ENCODE measurements at regions of chr1 and their contacts with region 1.

Region 1: GRCh38 chr1:116737020-116737854 is 17.0 kb upstream of the CD2 start:
- DNase-seq: peak; percentile 66
- ATAC-seq: peak; percentile 62
- H3K4me3 ChIP-seq: no peak overlapping the region
- H3K27ac ChIP-seq: peak overlapping the region; percentile 97
- H3K4me1 ChIP-seq: peaks cover 39% of the 10 kb centered on the region
- H3K27me3 ChIP-seq: no peaks in the 10 kb centered on the region
- CTCF ChIP-seq: peak; percentile 88 to 95 (median 93); a peak in 5 of 6 replicates
- EP300 ChIP-seq: no peak
- POLR2A ChIP-seq: peak; percentile 51; the same call in 1 of the 2 replicates
- RAD21 ChIP-seq: peak; percentile 95

Region 2: DNA sequence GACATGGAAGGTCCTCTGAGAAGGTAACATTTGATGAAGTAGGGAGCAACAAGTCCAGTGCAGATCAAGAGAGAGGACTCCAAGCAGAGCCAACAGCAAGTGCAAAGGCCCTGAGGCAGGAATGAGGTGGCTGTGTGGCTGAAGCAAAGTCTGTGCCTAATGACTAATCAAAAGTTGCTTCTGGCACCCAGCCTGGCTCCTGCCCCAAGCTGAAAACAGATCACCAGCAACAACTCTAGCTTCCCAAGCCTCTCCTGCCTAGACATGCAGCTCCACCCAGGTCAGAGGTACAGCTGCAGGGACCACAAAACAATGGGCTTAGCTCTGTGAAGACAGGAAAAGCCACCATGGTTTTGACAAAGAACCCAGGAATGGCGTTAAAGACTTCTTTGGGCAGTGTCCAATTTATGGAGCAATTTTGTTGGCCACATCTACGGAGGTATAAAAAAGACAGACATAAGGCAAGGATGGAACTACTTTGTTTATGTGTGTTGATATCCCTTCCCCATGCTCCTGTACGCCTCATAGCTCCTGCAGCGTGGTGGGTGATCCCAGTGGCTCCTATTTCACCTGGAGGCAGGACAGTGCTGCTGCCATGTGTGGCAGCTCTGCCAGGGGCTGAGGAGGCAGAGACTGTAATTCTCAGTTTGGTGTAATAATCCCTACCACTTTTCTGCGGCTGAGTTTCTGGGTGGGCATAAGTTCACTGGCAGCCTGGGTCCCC is 43.3 kb before region 1 on chr1:
- CTCF ChIA-PET with region 1: no interaction called
- POLR2A ChIA-PET with region 1: no interaction called
- RAD21 ChIA-PET with region 1: no interaction called
- SMC1A ChIA-PET with region 1: no interaction called
- in situ Hi-C with region 1: no loop called
- intact Hi-C with region 1: no loop called
- DNase-seq: no peak
- ATAC-seq: no peak
- H3K4me3 ChIP-seq: no peak overlapping the region
- H3K27ac ChIP-seq: no peak overlapping the region
- H3K4me1 ChIP-seq: no peaks in the 10 kb centered on the region
- H3K27me3 ChIP-seq: no peaks in the 10 kb centered on the region; a peak in 1 of 4 replicates
- CTCF ChIP-seq: no peak
- EP300 ChIP-seq: no peak
- POLR2A ChIP-seq: no peak
- RAD21 ChIP-seq: no peak

Region 3: GRCh38 chr1:116724765-116725375 is 12.4 kb before region 1 on chr1:
- CTCF ChIA-PET with region 1: interaction called, 72 read pairs
- POLR2A ChIA-PET with region 1: no interaction called
- RAD21 ChIA-PET with region 1: interaction called, 40 read pairs
- SMC1A ChIA-PET with region 1: interaction called, 64 read pairs
- in situ Hi-C with region 1: no loop called
- intact Hi-C with region 1: no loop called
- DNase-seq: no peak
- ATAC-seq: peak; percentile 88
- H3K4me3 ChIP-seq: no peak overlapping the region
- H3K27ac ChIP-seq: no peak overlapping the region
- H3K4me1 ChIP-seq: no peaks in the 10 kb centered on the region
- H3K27me3 ChIP-seq: no peaks in the 10 kb centered on the region
- CTCF ChIP-seq: peak; percentile 70 to 78 (median 72)
- EP300 ChIP-seq: no peak
- POLR2A ChIP-seq: no peak
- RAD21 ChIP-seq: peak; percentile 80

Region 4: DNA sequence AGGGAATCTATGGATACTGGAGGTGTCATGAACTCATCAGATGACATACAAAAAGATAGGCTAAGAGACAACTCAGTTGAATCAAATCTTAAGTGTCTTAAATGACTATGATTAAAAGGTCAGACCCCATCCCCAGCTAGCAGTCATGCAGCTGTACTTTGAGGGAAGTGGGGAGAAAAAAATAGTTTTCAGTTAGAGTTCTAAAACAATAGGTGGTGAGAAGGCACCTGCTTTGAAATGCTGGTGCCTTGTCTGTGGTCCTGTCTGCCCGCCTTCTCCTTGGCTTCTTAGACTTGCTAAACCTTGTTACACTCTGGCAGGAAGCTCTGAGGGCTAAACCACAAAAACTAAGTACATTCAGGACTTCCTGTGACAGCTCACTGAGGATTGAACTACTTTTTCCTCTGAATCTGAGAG is 32.3 kb after region 1 on chr1:
- CTCF ChIA-PET with region 1: interaction called, 120 read pairs
- POLR2A ChIA-PET with region 1: interaction called, 45 read pairs
- RAD21 ChIA-PET with region 1: interaction called, 176 read pairs
- SMC1A ChIA-PET with region 1: interaction called, 224 read pairs
- in situ Hi-C with region 1: no loop called
- intact Hi-C with region 1: loop called (anchors 1 kb)
- DNase-seq: peak; percentile 68
- ATAC-seq: peak; percentile 80
- H3K4me3 ChIP-seq: peak overlapping the region; percentile 6; the same call in 1 of the 2 replicates
- H3K27ac ChIP-seq: peak overlapping the region; percentile 40; the same call in 1 of the 2 replicates
- H3K4me1 ChIP-seq: peaks cover 21% of the 10 kb centered on the region
- H3K27me3 ChIP-seq: no peaks in the 10 kb centered on the region
- CTCF ChIP-seq: no peak
- EP300 ChIP-seq: 0 out of 4 replicates have a peak, but pooled peaks of 1 of the 2 experiments have one; percentile 39
- POLR2A ChIP-seq: no peak
- RAD21 ChIP-seq: no peak; the same call in 1 of the 2 replicates

Region 5: GRCh38 chr1:116817582-116818064 is 80.4 kb after region 1 on chr1:
- CTCF ChIA-PET with region 1: interaction called, 126 read pairs
- POLR2A ChIA-PET with region 1: interaction called, 11 read pairs
- RAD21 ChIA-PET with region 1: interaction called, 97 read pairs
- SMC1A ChIA-PET with region 1: interaction called, 109 read pairs
- in situ Hi-C with region 1: loop called (anchors 5 kb)
- intact Hi-C with region 1: loop called (anchors 1 kb)
- DNase-seq: no peak
- ATAC-seq: peak; percentile 91
- H3K4me3 ChIP-seq: no peak overlapping the region
- H3K27ac ChIP-seq: no peak overlapping the region
- H3K4me1 ChIP-seq: peaks cover 4% of the 10 kb centered on the region; the same call in 1 of the 2 replicates
- H3K27me3 ChIP-seq: no peaks in the 10 kb centered on the region
- CTCF ChIP-seq: peak; percentile 76 to 78 (median 77)
- EP300 ChIP-seq: no peak
- POLR2A ChIP-seq: no peak
- RAD21 ChIP-seq: peak; percentile 90

Region 6: DNA sequence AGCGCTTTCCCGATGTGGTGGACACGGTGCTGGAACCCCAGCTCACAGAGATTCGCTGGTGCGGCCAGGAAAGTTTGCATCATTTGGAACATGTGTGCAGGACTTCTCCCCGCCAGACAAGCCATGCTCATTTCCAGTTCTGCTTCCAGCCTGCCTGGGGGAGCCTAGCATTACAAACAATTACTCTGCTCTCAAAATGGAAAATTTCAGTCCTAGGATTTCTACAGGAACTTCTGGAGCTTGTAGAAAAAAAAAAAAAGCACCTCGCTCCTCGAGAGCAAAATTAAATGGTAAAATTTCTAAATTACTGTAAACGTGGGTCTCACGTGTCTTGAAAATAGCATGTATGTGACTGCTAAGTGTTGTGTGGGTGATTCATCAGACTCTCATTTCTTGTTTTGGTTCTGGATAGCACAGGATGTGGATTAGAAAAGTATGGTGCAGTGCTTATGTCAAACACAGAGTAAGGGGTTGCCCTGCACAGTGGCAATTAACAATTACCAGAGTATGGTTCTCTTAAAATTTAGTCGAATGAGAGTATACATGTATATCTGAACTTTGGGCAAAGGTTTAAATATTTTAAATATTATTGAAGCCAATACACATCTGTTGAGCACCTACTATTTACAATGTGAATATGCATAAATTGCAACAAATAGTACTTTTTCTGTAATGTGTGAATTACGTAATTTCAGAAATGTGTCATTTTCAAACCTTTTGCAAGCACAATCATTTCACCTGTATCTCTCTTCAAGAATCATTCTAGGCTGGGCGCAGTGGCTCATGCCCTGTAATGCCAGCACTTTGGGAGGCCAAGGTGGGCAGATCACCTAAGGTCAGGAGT is 110.7 kb after region 1 on chr1:
- CTCF ChIA-PET with region 1: interaction called, 19 read pairs
- POLR2A ChIA-PET with region 1: interaction called, 8 read pairs
- RAD21 ChIA-PET with region 1: interaction called, 29 read pairs
- SMC1A ChIA-PET with region 1: interaction called, 21 read pairs
- in situ Hi-C with region 1: no loop called
- intact Hi-C with region 1: no loop called
- DNase-seq: no peak
- ATAC-seq: peak; percentile 93
- H3K4me3 ChIP-seq: no peak overlapping the region
- H3K27ac ChIP-seq: no peak overlapping the region
- H3K4me1 ChIP-seq: peaks cover 6% of the 10 kb centered on the region; the same call in 1 of the 2 replicates
- H3K27me3 ChIP-seq: no peaks in the 10 kb centered on the region
- CTCF ChIP-seq: no peak
- EP300 ChIP-seq: no peak; a peak in 2 of 4 replicates
- POLR2A ChIP-seq: no peak
- RAD21 ChIP-seq: no peak

Region 7: DNA sequence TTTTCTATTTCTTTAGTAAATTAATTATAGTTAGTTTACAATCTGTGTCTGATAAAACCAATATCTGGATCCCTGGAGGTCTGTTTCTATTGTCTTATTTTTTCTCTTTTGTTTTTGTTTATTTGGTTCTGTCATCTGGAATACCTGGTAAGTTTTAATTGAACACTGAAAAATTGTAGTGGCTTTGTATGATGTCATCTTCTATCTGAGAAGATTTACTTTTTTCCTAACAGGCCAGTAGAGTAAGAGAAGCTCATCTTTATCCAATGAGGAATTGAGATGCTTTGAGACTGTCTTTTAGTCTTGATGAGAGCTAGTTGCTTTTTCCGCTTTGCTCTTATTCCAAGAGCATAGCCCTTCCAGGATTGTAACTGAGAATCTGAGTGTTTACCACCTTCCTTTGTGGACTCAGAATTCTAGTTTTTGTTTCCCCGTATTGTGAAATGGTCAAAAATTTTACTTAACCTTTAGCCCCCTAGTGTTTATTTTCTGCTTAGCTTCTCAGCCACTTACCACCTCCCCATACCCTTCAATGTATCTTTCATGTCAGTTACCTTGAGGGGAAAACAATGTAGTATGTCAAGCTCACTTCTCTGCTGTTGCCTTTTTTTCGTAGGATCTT is 197.5 kb after region 1 on chr1:
- CTCF ChIA-PET with region 1: interaction called, 23 read pairs
- POLR2A ChIA-PET with region 1: no interaction called
- RAD21 ChIA-PET with region 1: interaction called, 14 read pairs
- SMC1A ChIA-PET with region 1: interaction called, 25 read pairs
- in situ Hi-C with region 1: no loop called
- intact Hi-C with region 1: loop called (anchors 2 kb)
- DNase-seq: no peak
- ATAC-seq: peak; percentile 83
- H3K4me3 ChIP-seq: no peak overlapping the region
- H3K27ac ChIP-seq: no peak overlapping the region
- H3K4me1 ChIP-seq: no peaks in the 10 kb centered on the region
- H3K27me3 ChIP-seq: no peaks in the 10 kb centered on the region
- CTCF ChIP-seq: peak; percentile 37 to 54 (median 43); a peak in 5 of 6 replicates
- EP300 ChIP-seq: no peak
- POLR2A ChIP-seq: no peak
- RAD21 ChIP-seq: peak; percentile 39; the same call in 1 of the 2 replicates

Measured in GM12878 (cell line).